ENCODE measurements at regions of chr9 and their contacts with region 1.

Region 1: DNA sequence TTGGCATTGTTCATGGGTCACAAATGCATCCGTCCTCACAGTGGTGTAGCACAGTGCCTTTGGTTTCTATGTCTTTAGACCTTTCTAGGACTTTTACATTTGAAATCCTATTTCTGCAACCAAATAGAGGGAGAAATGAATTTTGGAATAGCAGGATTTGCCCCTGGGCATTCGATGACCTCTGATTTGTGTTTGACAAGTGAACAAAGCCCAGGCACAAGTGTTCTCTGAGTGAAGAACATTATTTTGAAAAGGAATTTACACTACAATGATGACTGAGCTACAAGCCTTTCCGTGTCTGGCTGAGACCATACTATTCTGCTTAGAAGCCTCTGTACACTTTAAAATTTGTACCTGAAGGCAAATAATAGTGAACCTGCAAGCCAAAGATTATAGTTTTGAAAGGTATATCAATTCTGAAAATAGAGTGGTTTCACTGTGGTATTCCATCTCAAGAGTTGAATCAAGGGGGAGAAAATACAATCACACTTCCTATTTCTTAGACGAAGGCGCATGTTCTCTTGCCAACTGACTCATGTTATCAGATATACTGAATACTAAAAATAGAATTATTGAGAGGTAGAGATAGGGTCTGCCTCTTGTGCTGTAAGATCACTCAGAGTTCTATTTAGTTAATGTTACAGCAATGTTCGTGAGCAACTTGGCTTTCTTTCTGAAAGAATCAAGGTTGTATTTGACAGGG is 297.6 kb downstream of the KDM4C start:
- DNase-seq: no peak
- H3K4me3 Mint-ChIP-seq: no peak overlapping the region
- H3K27ac Mint-ChIP-seq: no peak overlapping the region
- H3K4me1 Mint-ChIP-seq: peaks cover 7% of the 10 kb centered on the region
- H3K27me3 Mint-ChIP-seq: no peaks in the 10 kb centered on the region

Region 2: GRCh38 chr9:7368410-7369292 is 313.3 kb after region 1 on chr9:
- intact Hi-C with region 1: loop called (anchors 10 kb)
- DNase-seq: no peak
- H3K4me3 Mint-ChIP-seq: no peak overlapping the region
- H3K27ac Mint-ChIP-seq: no peak overlapping the region
- H3K4me1 Mint-ChIP-seq: no peaks in the 10 kb centered on the region
- H3K27me3 Mint-ChIP-seq: peaks cover under 1% of the 10 kb centered on the region

Region 3: DNA sequence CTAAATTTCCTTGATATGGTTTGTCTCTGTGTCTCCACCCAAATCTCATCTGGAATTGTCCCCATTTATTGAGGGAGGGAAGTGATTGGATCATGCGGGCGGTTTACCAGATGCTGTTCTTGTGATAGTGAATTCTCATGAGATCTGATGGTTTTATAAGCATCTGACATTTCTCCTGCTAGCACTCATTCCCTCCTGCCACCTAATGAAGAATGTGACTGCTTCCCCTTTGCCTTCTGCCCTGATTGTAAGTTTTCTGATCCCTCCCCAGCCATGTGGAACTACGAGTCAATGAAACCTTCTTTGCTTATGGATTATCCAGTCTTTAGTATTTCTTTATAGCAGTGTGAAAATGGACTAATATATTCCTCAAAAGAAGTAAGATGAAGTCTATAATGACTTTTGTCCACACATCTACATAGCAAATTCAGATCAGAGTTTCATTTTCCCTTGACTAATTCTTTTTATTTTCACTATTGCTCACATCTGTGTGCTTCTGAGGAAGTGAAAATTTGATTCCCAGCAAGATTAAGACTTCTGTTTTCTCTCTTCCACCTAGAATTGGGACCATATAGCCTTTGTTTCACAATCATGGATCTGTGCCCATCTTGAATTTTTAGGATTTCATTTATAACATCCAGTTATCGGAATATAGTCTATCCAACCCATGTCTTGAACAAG is 350.7 kb after region 1 on chr9:
- intact Hi-C with region 1: loop called (anchors 10 kb)
- DNase-seq: no peak
- H3K4me3 Mint-ChIP-seq: no peak overlapping the region
- H3K27ac Mint-ChIP-seq: no peak overlapping the region
- H3K4me1 Mint-ChIP-seq: peaks cover 10% of the 10 kb centered on the region
- H3K27me3 Mint-ChIP-seq: peaks cover 13% of the 10 kb centered on the region

Region 4: DNA sequence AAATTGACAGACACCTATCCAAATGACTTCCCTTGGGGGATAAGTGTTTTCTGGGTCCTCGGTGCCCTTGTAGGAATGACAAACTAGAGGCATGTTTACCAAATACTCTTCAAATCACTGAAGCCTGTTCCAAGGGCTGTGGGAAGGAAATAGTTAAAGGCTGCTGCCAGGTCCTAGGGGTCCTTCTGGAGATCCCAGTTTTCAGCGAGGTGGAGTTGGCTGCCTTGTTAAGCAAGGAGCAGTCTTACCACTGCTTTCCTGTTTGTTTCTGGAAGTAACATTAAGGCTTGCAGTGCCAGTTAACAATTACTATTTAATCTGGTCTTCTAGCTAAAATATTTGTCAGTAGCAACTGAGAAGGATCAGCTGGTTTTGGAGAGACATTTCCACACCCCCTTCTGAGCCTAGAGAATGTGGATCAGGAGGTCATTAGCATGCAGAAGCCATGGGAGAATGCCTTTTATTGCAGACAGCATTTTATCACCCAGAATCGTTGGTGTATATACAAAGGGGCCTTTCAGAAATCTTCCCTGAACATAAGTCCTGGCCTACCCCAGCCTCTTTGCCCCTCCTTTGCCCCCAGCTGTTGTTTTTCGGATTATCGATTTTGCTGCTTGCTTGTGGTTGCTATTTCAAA is 505.4 kb after region 1 on chr9:
- intact Hi-C with region 1: loop called (anchors 10 kb)
- DNase-seq: no peak
- H3K4me3 Mint-ChIP-seq: no peak overlapping the region
- H3K27ac Mint-ChIP-seq: no peak overlapping the region
- H3K4me1 Mint-ChIP-seq: no peaks in the 10 kb centered on the region
- H3K27me3 Mint-ChIP-seq: peaks cover 9% of the 10 kb centered on the region